ENCODE measurements at regions of chr5 and their contacts with region 1.

Region 1: GRCh38 chr5:139262742-139263445 is 30.6 kb upstream of the MATR3 start:
- H3K4me3 Mint-ChIP-seq: no peak overlapping the region
- H3K27ac Mint-ChIP-seq: no peak overlapping the region
- H3K4me1 Mint-ChIP-seq: peaks cover 19% of the 10 kb centered on the region
- H3K27me3 Mint-ChIP-seq: peaks cover 11% of the 10 kb centered on the region

Region 2: GRCh38 chr5:138641547-138642298 is 621.2 kb before region 1 on chr5:
- intact Hi-C with region 1: loop called (anchors 2 kb)
- H3K4me3 Mint-ChIP-seq: no peak overlapping the region
- H3K27ac Mint-ChIP-seq: no peak overlapping the region
- H3K4me1 Mint-ChIP-seq: no peaks in the 10 kb centered on the region
- H3K27me3 Mint-ChIP-seq: peaks cover 17% of the 10 kb centered on the region

Region 3: DNA sequence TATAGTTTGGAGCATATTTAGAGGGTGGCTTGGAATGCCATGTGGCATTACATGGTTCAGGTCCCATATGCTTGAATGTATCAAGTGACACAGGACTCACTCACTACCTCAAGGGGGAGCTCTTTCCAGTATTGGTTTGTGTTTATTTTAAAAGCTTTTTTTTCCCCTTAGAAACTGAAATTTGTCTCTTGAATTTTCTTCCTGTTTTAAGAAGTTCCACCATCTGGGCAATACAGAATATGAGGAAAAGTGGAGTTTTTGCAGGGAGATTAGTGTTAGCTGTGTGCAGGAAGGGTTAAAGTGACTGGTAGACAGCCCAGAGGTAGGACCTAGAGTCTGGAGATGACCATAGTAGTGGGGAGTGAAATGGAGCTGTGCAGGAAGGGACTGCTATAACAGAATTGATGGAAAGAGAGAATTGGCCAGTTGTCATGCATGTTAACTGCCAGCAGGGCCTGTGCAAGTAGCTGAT is 473.1 kb before region 1 on chr5:
- intact Hi-C with region 1: loop called (anchors 1 kb)
- H3K4me3 Mint-ChIP-seq: no peak overlapping the region
- H3K27ac Mint-ChIP-seq: no peak overlapping the region
- H3K4me1 Mint-ChIP-seq: peaks cover 21% of the 10 kb centered on the region
- H3K27me3 Mint-ChIP-seq: no peaks in the 10 kb centered on the region

Region 4: GRCh38 chr5:138824924-138825863 is 437.7 kb before region 1 on chr5:
- intact Hi-C with region 1: loop called (anchors 2 kb)
- H3K4me3 Mint-ChIP-seq: no peak overlapping the region
- H3K27ac Mint-ChIP-seq: no peak overlapping the region
- H3K4me1 Mint-ChIP-seq: peaks cover 1% of the 10 kb centered on the region
- H3K27me3 Mint-ChIP-seq: no peaks in the 10 kb centered on the region

Region 5: GRCh38 chr5:139091439-139092156 is 171.3 kb before region 1 on chr5:
- intact Hi-C with region 1: loop called (anchors 5 kb)
- H3K4me3 Mint-ChIP-seq: no peak overlapping the region
- H3K27ac Mint-ChIP-seq: no peak overlapping the region
- H3K4me1 Mint-ChIP-seq: peaks cover 72% of the 10 kb centered on the region
- H3K27me3 Mint-ChIP-seq: no peaks in the 10 kb centered on the region

Region 6: DNA sequence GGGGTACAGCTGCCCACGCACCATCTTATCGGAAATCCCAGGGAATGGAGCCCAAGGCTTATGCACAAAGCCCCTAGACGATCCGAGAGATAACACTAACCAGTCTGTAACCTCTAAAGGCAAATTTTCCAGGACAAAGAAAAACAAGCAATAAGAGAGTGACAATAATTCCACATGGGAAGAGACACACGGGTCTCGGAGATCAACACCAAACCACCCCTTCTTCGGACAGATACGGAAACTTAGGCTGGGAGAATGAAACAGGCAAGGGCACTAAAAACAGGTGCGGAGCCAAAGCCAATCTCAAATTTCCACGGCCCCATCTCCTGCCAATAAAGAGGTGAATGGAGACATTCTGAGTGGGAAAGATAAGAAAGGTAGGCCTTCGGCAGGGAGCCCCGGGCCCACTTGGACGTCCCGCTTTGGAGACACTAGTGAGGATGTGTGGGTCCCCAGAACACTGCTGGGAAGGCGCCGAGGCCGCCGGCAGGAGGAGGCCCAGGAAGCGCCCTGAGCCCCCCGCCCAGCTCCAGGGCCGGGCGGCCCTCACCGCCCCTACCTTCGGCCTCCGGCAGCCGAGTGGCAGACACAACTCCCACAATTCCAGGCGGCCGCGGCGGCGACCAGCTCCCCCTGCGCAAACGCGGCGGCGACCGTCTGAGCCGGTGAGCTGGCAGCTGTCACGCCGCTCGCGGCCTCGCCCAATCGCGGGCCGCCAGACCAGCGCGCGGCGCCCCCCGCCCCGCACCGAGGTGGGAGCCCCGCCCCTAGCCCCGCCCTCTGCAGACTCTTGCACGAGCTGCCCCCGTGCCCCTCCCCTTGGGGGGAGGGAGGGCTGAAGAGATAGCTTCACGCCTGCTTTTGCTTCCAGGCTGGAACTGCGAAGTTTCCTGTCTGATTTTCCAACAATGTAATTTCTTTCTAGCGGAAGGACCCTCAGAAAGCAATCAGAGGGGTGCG is 64.9 kb before region 1 on chr5 and contains the start of gene SIL1:
- intact Hi-C with region 1: loop called (anchors 5 kb)
- H3K4me3 Mint-ChIP-seq: peak within 1 kb of the TSS; percentile 91
- H3K27ac Mint-ChIP-seq: peak within 1 kb of the TSS; percentile 94
- H3K4me1 Mint-ChIP-seq: peaks cover 34% of the 10 kb centered on the region
- H3K27me3 Mint-ChIP-seq: no peaks in the 10 kb centered on the region